OCI-LY7 (cell line): ENCODE measurements at regions of chr2 and their contacts with region 1.

Region 1: GRCh38 chr2:68925295-68925896 is 27.3 kb downstream of the GKN2 start:
- DNase-seq: peak; percentile 79
- H3K4me3 ChIP-seq: no peak overlapping the region
- H3K27ac ChIP-seq: no peak overlapping the region
- H3K4me1 ChIP-seq: peaks cover 4% of the 10 kb centered on the region
- CTCF ChIP-seq: peak; percentile 99

Region 2: GRCh38 chr2:68487773-68488355 is 437.5 kb before region 1 on chr2:
- CTCF ChIA-PET with region 1: no interaction called
- POLR2A ChIA-PET with region 1: interaction called, 4 read pairs
- intact Hi-C with region 1: loop called (anchors 2 kb)
- DNase-seq: peak; percentile 56
- H3K4me3 ChIP-seq: no peak overlapping the region
- H3K27ac ChIP-seq: no peak overlapping the region
- H3K4me1 ChIP-seq: no peaks in the 10 kb centered on the region
- CTCF ChIP-seq: peak; percentile 93

Region 3: DNA sequence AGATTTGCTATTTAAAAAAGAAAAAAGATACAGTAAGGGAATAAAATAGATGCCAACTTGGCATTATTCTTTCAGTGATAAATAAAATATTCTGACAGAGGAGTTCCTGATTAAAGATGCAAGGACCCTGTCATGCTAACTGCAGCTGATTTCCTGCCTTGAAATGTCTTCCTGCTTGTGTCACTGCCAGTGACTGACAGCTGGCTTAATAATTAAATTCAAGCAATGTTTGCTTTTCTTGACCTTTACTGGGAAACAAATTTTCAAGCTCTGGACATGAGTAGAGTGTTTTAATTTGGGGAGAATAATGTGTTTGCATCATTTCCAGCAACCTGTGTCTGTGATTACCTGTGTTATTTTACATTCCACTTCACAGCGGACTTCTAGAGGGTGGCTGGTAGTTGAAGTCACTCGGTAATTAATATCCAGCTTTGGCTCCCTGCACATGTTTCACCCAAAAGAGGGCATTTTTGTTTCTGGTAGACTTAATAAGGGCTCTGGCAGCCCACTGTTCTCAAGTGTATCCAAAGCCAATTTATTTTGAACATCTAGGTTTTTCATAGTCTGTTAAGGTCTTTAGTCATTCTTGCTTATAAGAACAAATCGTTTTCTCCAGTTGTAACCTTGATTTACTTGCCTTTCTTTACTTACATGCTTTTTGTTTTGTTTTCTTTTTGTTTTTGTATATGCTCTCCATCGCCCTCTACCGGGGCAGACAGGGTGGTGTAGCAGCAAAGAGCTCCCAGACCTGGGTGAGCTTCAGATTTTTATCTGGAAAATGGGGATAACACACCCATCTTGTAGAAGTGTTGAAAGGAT is 330.5 kb before region 1 on chr2:
- CTCF ChIA-PET with region 1: no interaction called
- POLR2A ChIA-PET with region 1: no interaction called
- intact Hi-C with region 1: loop called (anchors 10 kb)
- DNase-seq: peak; percentile 57
- H3K4me3 ChIP-seq: no peak overlapping the region
- H3K27ac ChIP-seq: no peak overlapping the region
- H3K4me1 ChIP-seq: peaks cover 15% of the 10 kb centered on the region
- CTCF ChIP-seq: peak; percentile 98

Region 4: DNA sequence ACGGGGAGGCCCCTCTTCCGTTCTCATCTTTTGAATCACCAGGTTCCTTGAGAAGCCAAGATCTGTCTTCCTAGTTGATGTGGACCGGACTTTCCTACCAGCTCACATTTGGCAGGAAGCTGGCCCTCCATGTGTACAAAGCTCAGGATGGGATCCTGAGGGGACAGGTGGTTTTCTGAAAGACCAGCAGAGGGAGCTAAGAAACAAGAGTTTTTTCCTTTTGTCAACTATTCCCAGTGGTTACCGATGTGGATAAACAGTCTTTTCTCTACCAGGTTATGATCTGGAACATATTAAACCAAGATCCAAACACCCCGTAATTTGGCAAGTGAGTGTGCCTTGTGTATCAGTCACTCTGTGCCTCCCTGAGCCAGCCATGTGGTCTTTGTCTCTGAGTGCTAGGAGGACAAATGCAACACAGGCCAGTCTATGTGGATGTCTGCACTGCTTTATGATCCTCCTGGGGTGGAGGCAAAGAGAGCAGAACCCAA is 215.9 kb before region 1 on chr2:
- CTCF ChIA-PET with region 1: interaction called, 8 read pairs
- POLR2A ChIA-PET with region 1: interaction called, 4 read pairs
- intact Hi-C with region 1: loop called (anchors 1 kb)
- DNase-seq: peak; percentile 73
- H3K4me3 ChIP-seq: no peak overlapping the region
- H3K27ac ChIP-seq: no peak overlapping the region
- H3K4me1 ChIP-seq: peaks cover 21% of the 10 kb centered on the region
- CTCF ChIP-seq: peak; percentile 98

Region 5: DNA sequence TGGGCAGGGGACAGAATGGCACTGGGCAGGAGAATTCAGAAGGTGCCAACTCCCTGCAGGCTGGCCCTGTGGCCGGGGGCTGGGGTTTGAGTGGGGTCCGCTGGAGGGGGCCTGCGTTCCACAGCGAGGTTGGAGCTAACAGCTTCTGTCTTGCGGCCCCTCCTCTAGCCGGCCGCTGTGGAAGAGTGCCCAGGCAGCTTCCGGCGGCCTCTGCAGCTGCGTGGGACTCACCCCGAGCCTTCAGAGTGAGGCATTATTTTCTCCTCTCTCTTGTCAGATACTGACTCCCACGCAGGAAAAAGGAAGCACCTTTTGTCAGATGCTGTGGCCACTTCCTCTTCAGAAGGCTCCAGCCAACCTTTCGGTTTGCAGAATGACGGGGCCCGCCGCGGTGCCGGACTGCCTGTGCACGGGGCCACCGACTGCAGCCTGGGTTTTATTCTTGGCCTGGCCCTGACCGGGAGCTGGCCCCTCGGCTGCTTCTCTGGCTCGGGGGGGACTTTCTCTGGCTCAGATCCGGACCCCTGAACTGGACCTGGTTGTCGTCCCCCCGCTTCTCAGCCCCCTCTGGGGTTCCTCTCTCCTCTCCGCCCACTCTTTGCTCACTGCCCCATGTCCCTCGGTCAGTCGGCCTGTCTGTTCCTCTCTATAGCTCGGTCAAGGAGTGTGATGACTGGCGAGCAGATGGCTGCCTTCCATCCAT is 150.7 kb before region 1 on chr2:
- CTCF ChIA-PET with region 1: no interaction called
- POLR2A ChIA-PET with region 1: no interaction called
- intact Hi-C with region 1: no loop called
- DNase-seq: peak; percentile 87
- H3K4me3 ChIP-seq: peak overlapping the region; percentile 69
- H3K27ac ChIP-seq: peak overlapping the region; percentile 54
- H3K4me1 ChIP-seq: peaks cover 81% of the 10 kb centered on the region
- CTCF ChIP-seq: no peak